ENCODE measurements at regions of chr13 and their contacts with region 1.

Region 1: GRCh38 chr13:106536244-106537034 is 977 bp upstream of the EFNB2 start:
- DNase-seq: peak; percentile 78 to 82 (median 80)
- H3K4me3 ChIP-seq: peak overlapping the region; percentile 73 to 77
- H3K4me3 Mint-ChIP-seq: peak overlapping the region; percentile 90 to 98 (median 95)
- H3K27ac ChIP-seq: no peak overlapping the region
- H3K27ac Mint-ChIP-seq: peak overlapping the region in 6 of 7 donors; percentile 75 to 91 (median 82)
- H3K4me1 ChIP-seq: peaks cover 24% of the 10 kb centered on the region
- H3K4me1 Mint-ChIP-seq: peaks cover 11 to 21% (median 19%) of the 10 kb centered on the region in 4 donors
- H3K27me3 ChIP-seq: peaks cover 3% of the 10 kb centered on the region
- H3K27me3 Mint-ChIP-seq: peaks cover 13 to 21% of the 10 kb centered on the region in 2 donors

Region 2: DNA sequence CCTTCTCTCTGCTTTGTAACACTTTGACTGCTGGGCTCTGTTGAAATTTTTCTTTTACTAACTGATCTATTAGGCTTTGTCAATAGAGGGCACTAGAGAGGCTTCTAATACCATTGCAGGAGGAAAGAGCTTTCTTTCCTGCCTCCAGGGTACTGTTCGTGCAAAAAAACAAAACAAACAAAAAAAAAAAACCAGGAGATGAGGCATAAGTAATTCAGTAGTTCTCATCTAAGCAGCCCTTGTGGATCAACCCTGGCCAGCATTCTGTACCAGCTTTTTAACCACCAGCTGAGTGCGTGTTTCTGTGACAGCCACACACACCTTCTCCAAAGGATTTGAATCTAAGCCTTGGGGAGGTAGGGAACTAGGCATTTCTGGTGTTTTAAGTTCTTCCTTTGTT is 1762.7 kb before region 1 on chr13:
- CTCF ChIA-PET with region 1: no interaction called
- POLR2A ChIA-PET with region 1: no interaction called
- intact Hi-C with region 1: loop called (anchors 2 kb)
- DNase-seq: peak in 3 of 5 donors; percentile 0 to 4 (median 2)
- H3K4me3 ChIP-seq: no peak overlapping the region
- H3K4me3 Mint-ChIP-seq: no peak overlapping the region
- H3K27ac ChIP-seq: no peak overlapping the region
- H3K27ac Mint-ChIP-seq: no peak overlapping the region
- H3K4me1 ChIP-seq: no peaks in the 10 kb centered on the region
- H3K4me1 Mint-ChIP-seq: no peaks in the 10 kb centered on the region
- H3K27me3 ChIP-seq: no peaks in the 10 kb centered on the region
- H3K27me3 Mint-ChIP-seq: peaks cover 0 to 4% of the 10 kb centered on the region in 2 donors

Region 3: DNA sequence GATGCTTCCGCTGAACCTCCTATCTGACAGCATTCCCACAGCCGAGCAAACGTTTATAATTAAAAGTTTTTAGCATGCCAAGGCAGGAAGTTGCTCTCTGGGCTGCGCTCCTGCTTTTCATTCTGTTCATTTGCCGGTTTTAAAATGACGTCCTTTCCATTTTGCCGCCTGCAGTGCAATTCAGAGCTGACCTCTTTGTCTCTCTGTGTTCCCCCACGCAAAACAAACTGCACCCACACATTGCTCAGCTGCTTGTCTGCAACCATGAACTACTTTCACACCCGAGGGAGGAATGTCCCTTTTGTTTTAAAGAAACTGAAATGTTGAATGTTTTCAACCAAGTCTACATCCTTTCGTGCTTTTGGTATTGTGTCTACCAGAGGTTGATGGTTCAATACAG is 417.4 kb before region 1 on chr13:
- CTCF ChIA-PET with region 1: no interaction called
- POLR2A ChIA-PET with region 1: no interaction called
- intact Hi-C with region 1: no loop called
- DNase-seq: no peak
- H3K4me3 ChIP-seq: no peak overlapping the region
- H3K4me3 Mint-ChIP-seq: no peak overlapping the region
- H3K27ac ChIP-seq: no peak overlapping the region
- H3K27ac Mint-ChIP-seq: no peak overlapping the region
- H3K4me1 ChIP-seq: no peaks in the 10 kb centered on the region
- H3K4me1 Mint-ChIP-seq: no peaks in the 10 kb centered on the region
- H3K27me3 ChIP-seq: no peaks in the 10 kb centered on the region
- H3K27me3 Mint-ChIP-seq: peaks cover 3 to 4% of the 10 kb centered on the region in 2 donors

Region 4: DNA sequence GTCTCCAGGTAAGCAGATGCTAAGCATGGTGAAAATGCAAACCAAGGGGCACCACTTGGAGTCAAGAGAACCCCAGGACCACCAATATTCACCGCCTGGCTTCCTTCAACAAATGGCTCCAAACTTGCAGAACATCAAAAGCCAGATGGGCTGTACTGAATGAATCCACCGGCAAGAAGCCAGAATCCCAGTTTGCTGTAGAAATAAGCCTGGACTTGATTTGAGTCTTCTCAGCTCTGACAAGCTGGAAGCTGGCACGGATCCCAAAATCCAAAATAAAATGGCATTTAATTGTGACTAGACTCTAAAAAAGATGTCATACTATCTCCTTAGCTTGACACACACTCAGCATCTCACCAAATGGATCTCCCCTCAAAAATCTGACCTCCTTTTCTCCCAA is 12.9 kb before region 1 on chr13:
- CTCF ChIA-PET with region 1: interaction called, 10 read pairs
- POLR2A ChIA-PET with region 1: no interaction called
- intact Hi-C with region 1: no loop called
- DNase-seq: no peak
- H3K4me3 ChIP-seq: no peak overlapping the region
- H3K4me3 Mint-ChIP-seq: no peak overlapping the region
- H3K27ac ChIP-seq: no peak overlapping the region
- H3K27ac Mint-ChIP-seq: no peak overlapping the region
- H3K4me1 ChIP-seq: no peaks in the 10 kb centered on the region
- H3K4me1 Mint-ChIP-seq: no peaks in the 10 kb centered on the region
- H3K27me3 ChIP-seq: no peaks in the 10 kb centered on the region
- H3K27me3 Mint-ChIP-seq: peaks cover 23 to 31% of the 10 kb centered on the region in 2 donors

Region 5: GRCh38 chr13:106567474-106568298 is 31.2 kb after region 1 on chr13 and contains the start of gene ARGLU1:
- CTCF ChIA-PET with region 1: interaction called, 46 read pairs
- POLR2A ChIA-PET with region 1: interaction called, 61 read pairs
- intact Hi-C with region 1: loop called (anchors 1 kb)
- DNase-seq: peak; percentile 93 to 97 (median 95)
- H3K4me3 ChIP-seq: peak within 1 kb of the TSS; percentile 33 to 95
- H3K4me3 Mint-ChIP-seq: peak within 1 kb of the TSS; percentile 94 to 100 (median 98)
- H3K27ac ChIP-seq: peak within 1 kb of the TSS; percentile 95
- H3K27ac Mint-ChIP-seq: peak within 1 kb of the TSS; percentile 92 to 98 (median 95)
- H3K4me1 ChIP-seq: peaks cover 59% of the 10 kb centered on the region
- H3K4me1 Mint-ChIP-seq: peaks cover 39 to 67% (median 57%) of the 10 kb centered on the region in 4 donors
- H3K27me3 ChIP-seq: no peaks in the 10 kb centered on the region
- H3K27me3 Mint-ChIP-seq: no peaks in the 10 kb centered on the region
- total RNA-seq, gene ARGLU1: 229 to 252 TPM

Region 6: GRCh38 chr13:107883561-107884175 is 1347.2 kb after region 1 on chr13:
- CTCF ChIA-PET with region 1: no interaction called
- POLR2A ChIA-PET with region 1: no interaction called
- intact Hi-C with region 1: no loop called
- DNase-seq: no peak
- H3K4me3 ChIP-seq: no peak overlapping the region
- H3K4me3 Mint-ChIP-seq: no peak overlapping the region
- H3K27ac ChIP-seq: no peak overlapping the region
- H3K27ac Mint-ChIP-seq: no peak overlapping the region
- H3K4me1 ChIP-seq: no peaks in the 10 kb centered on the region
- H3K4me1 Mint-ChIP-seq: no peaks in the 10 kb centered on the region
- H3K27me3 ChIP-seq: no peaks in the 10 kb centered on the region
- H3K27me3 Mint-ChIP-seq: no peaks in the 10 kb centered on the region

Measured in CD4-positive, alpha-beta memory T cell (primary cell).